A673 (cell line): ENCODE measurements at regions of chr6 and their contacts with region 1.

Region 1: GRCh38 chr6:102051720-102052119 is 658.2 kb downstream of the GRIK2 start:
- DNase-seq: peak; percentile 55
- H3K4me3 ChIP-seq: no peak overlapping the region
- H3K27ac ChIP-seq: peak overlapping the region; percentile 98
- H3K4me1 ChIP-seq: peaks cover 74% of the 10 kb centered on the region
- H3K27me3 ChIP-seq: no peaks in the 10 kb centered on the region
- CTCF ChIP-seq: no peak

Region 2: GRCh38 chr6:101114703-101115102 is 937.0 kb before region 1 on chr6:
- CTCF ChIA-PET with region 1: no interaction called
- POLR2A ChIA-PET with region 1: no interaction called
- intact Hi-C with region 1: loop called (anchors 5 kb)
- DNase-seq: peak; percentile 90
- H3K4me3 ChIP-seq: peak overlapping the region; percentile 9
- H3K27ac ChIP-seq: no peak overlapping the region
- H3K4me1 ChIP-seq: peaks cover 60% of the 10 kb centered on the region
- H3K27me3 ChIP-seq: no peaks in the 10 kb centered on the region
- CTCF ChIP-seq: peak; percentile 84

Region 3: GRCh38 chr6:101146389-101146788 is 905.3 kb before region 1 on chr6:
- CTCF ChIA-PET with region 1: no interaction called
- POLR2A ChIA-PET with region 1: no interaction called
- intact Hi-C with region 1: no loop called
- DNase-seq: no peak
- H3K4me3 ChIP-seq: no peak overlapping the region
- H3K27ac ChIP-seq: no peak overlapping the region
- H3K4me1 ChIP-seq: no peaks in the 10 kb centered on the region
- H3K27me3 ChIP-seq: no peaks in the 10 kb centered on the region
- CTCF ChIP-seq: no peak

Region 4: DNA sequence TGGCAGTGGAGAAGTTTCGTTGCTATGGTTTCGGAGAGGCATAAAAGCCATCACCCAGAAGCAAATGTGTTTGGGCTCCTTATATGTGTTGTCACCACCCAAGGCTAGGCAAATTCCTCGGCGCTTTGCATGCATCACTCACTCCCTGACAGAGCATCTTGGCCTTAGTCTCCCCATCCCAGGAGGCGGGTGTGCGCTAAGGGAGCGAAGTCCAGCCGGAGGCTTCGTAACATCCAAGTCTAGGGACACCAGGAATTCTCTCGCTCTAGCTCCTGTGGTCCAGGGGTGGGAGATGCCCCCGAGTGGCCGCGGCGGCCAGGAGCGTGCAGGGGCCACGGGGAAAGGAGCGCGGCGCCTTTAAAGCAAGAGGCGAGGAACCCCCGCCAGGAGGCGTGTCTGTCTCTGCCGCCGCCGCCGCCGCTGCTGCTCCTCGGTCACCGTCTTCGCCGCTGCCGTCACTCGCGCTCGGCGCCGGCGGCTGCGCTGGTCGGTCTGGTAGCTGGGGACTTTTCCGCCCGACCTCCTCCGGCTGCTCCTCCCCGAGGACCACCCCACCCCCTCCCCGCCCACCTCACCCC is 658.4 kb before region 1 on chr6 and contains the start of gene GRIK2:
- CTCF ChIA-PET with region 1: no interaction called
- POLR2A ChIA-PET with region 1: interaction called, 3 read pairs
- intact Hi-C with region 1: loop called (anchors 10 kb)
- DNase-seq: peak; percentile 81
- H3K4me3 ChIP-seq: peak within 1 kb of the TSS; percentile 75
- H3K27ac ChIP-seq: peak within 1 kb of the TSS; percentile 71
- H3K4me1 ChIP-seq: peaks cover 13% of the 10 kb centered on the region
- H3K27me3 ChIP-seq: no peaks in the 10 kb centered on the region
- CTCF ChIP-seq: peak; percentile 45; the same call in 1 of the 2 replicates
- total RNA-seq, gene GRIK2: 62.1 and 65.6 TPM in 2 replicates

Region 5: GRCh38 chr6:101907356-101908217 is 144.1 kb before region 1 on chr6:
- CTCF ChIA-PET with region 1: no interaction called
- POLR2A ChIA-PET with region 1: no interaction called
- intact Hi-C with region 1: no loop called
- DNase-seq: peak; percentile 94
- H3K4me3 ChIP-seq: peak overlapping the region; percentile 47
- H3K27ac ChIP-seq: peak overlapping the region; percentile 96
- H3K4me1 ChIP-seq: peaks cover 69% of the 10 kb centered on the region
- H3K27me3 ChIP-seq: no peaks in the 10 kb centered on the region
- CTCF ChIP-seq: no peak; the same call in 1 of the 2 replicates

Region 6: GRCh38 chr6:101918471-101918870 is 133.2 kb before region 1 on chr6:
- CTCF ChIA-PET with region 1: no interaction called
- POLR2A ChIA-PET with region 1: interaction called, 12 read pairs
- intact Hi-C with region 1: loop called (anchors 1 kb)
- DNase-seq: peak; percentile 96
- H3K4me3 ChIP-seq: no peak overlapping the region
- H3K27ac ChIP-seq: peak overlapping the region; percentile 96
- H3K4me1 ChIP-seq: peaks cover 96% of the 10 kb centered on the region
- H3K27me3 ChIP-seq: no peaks in the 10 kb centered on the region
- CTCF ChIP-seq: no peak

Region 7: GRCh38 chr6:101980933-101981332 is 70.8 kb before region 1 on chr6:
- CTCF ChIA-PET with region 1: no interaction called
- POLR2A ChIA-PET with region 1: interaction called, 13 read pairs
- intact Hi-C with region 1: no loop called
- DNase-seq: no peak
- H3K4me3 ChIP-seq: no peak overlapping the region
- H3K27ac ChIP-seq: no peak overlapping the region
- H3K4me1 ChIP-seq: peaks cover 30% of the 10 kb centered on the region
- H3K27me3 ChIP-seq: no peaks in the 10 kb centered on the region
- CTCF ChIP-seq: no peak

Region 8: GRCh38 chr6:102520966-102521365 is 469.2 kb after region 1 on chr6:
- CTCF ChIA-PET with region 1: no interaction called
- POLR2A ChIA-PET with region 1: no interaction called
- intact Hi-C with region 1: no loop called
- DNase-seq: no peak
- H3K4me3 ChIP-seq: no peak overlapping the region
- H3K27ac ChIP-seq: no peak overlapping the region
- H3K4me1 ChIP-seq: no peaks in the 10 kb centered on the region
- H3K27me3 ChIP-seq: no peaks in the 10 kb centered on the region
- CTCF ChIP-seq: no peak

Region 9: GRCh38 chr6:103122766-103123601 is 1071.3 kb after region 1 on chr6:
- CTCF ChIA-PET with region 1: no interaction called
- POLR2A ChIA-PET with region 1: no interaction called
- intact Hi-C with region 1: loop called (anchors 10 kb)
- DNase-seq: peak; percentile 87
- H3K4me3 ChIP-seq: no peak overlapping the region
- H3K27ac ChIP-seq: no peak overlapping the region
- H3K4me1 ChIP-seq: peaks cover 6% of the 10 kb centered on the region
- H3K27me3 ChIP-seq: no peaks in the 10 kb centered on the region
- CTCF ChIP-seq: peak; percentile 78